WTC11 (cell line): ENCODE measurements at regions of chr11 and their contacts with region 1.

Region 1: GRCh38 chr11:57456960-57457642 is 3.2 kb upstream of the RTN4RL2 start:
- DNase-seq: peak; percentile 94
- ATAC-seq: peak; percentile 38
- H3K4me3 Mint-ChIP-seq: peak overlapping the region; percentile 80
- H3K27ac Mint-ChIP-seq: no peak overlapping the region
- H3K4me1 Mint-ChIP-seq: peaks cover 26% of the 10 kb centered on the region
- H3K27me3 Mint-ChIP-seq: peaks cover 62% of the 10 kb centered on the region
- CTCF ChIP-seq: peak; percentile 100

Region 2: DNA sequence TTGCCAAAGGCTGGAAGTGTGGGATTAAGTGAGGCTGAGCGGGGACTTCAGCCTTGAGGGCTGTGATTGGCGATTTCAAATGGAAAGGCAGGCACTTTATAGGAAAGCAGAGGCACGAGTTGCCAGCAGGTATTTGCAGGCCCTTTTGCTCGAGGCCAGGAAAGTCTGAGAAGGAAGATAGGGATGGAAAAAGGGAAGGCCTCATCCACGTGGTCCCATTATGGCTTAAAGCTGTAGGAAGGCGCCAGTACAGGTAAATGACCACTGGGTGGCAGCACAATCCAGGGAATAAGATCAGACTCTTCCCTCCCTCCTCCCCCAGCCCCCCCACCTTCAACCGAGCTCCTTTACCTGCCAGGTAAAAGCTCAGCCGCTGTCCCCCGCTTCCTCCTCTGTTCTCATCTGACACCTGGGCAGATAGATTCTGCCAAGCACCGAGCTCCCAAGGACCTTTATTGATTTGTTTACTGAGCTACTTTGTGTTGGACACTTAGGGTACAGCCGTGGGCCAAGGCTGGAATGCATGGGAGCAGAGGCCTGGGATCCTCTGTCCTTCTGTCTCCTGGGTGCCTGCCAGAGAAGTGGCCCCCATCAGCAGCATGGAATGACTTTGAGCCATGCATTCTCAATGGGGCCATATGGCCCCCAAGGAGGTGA is 111.4 kb before region 1 on chr11:
- CTCF ChIA-PET with region 1: interaction called, 59 read pairs
- POLR2A ChIA-PET with region 1: interaction called, 6 read pairs
- DNase-seq: peak; percentile 89
- ATAC-seq: peak; percentile 70
- H3K4me3 Mint-ChIP-seq: peak overlapping the region; percentile 24; the same call in 1 of the 2 replicates
- H3K27ac Mint-ChIP-seq: no peak overlapping the region
- H3K4me1 Mint-ChIP-seq: peaks cover 29% of the 10 kb centered on the region
- H3K27me3 Mint-ChIP-seq: peaks cover 16% of the 10 kb centered on the region
- CTCF ChIP-seq: peak; percentile 89

Region 3: DNA sequence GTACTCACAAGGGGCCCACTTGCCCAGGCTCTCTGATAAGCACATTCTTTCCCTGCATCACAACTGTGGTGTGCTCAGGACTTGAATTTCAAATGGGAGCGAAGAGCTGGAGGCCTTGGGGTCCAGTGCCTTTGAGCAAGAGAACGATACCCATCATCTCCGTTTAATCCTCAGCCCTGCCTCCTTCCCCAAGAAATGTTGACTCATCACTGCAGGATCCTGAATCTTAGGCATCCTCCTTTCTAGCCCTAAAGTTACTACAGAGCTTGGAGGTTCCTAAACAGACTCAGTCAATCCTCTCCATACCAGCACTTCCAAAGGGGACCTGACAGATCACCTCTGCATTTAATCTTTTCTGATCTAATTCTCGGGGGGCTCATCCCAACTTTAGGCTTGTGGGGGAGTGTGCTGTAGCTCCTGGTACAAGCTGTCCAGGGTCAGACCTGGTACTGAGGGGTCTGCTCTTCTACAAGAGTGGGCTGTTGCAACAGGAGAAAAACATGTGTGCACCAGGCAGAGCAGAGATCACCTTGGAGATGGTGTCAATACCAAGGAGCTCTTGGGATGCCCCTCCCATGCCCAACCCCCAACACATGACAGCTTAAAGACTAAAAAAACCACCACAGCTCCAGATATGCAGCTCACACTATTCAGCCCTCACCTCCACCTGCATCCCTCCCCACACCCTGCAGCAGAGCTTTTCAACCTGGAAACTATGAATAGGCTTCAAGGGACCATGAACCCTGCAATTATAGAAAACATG is 62.7 kb before region 1 on chr11:
- CTCF ChIA-PET with region 1: interaction called, 10 read pairs
- POLR2A ChIA-PET with region 1: no interaction called
- DNase-seq: no peak
- ATAC-seq: no peak
- H3K4me3 Mint-ChIP-seq: no peak overlapping the region
- H3K27ac Mint-ChIP-seq: no peak overlapping the region
- H3K4me1 Mint-ChIP-seq: no peaks in the 10 kb centered on the region
- H3K27me3 Mint-ChIP-seq: peaks cover 19% of the 10 kb centered on the region
- CTCF ChIP-seq: no peak

Region 4: GRCh38 chr11:57474017-57474802 is 17.1 kb after region 1 on chr11:
- CTCF ChIA-PET with region 1: interaction called, 260 read pairs
- POLR2A ChIA-PET with region 1: interaction called, 12 read pairs
- DNase-seq: no peak
- ATAC-seq: peak; percentile 29
- H3K4me3 Mint-ChIP-seq: no peak overlapping the region
- H3K27ac Mint-ChIP-seq: no peak overlapping the region
- H3K4me1 Mint-ChIP-seq: peaks cover 45% of the 10 kb centered on the region
- H3K27me3 Mint-ChIP-seq: peaks cover 46% of the 10 kb centered on the region
- CTCF ChIP-seq: no peak

Region 5: DNA sequence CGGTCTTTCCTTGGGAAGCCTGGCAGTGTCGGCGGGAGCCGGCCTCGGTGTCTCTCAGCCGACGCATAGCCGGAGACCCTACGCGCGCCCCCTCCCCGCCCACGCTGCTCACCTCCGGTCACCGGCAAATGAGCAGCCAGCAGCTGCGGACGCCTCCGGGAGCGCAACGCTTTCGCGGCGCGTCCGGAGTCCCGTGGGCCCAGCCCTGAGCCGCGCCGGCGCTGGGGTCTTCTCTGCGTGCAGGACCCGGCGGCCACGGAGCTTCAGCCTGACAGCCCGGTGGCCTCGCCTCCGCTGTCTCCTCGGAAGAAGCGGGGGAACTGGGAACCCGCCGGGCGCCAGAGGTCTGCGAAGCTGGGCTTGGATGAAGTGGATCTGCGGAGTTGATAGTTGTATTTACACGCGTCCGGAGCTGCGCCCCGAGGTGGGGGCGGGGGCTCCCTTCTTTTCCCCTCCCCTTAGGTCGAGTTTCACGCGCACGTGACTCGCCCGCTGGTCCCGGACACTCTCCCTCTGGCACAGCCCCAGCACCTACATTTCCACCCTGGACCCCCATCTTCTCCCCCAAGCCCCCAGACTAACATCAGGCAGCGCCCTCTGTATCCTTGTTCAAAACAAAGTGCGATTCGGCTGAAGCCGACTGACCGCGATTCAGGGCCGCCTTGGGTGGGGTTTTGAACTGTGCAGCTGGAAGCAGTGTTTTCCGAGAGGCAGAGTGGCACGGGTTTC is 58.4 kb after region 1 on chr11 and contains the start of gene SLC43A1:
- CTCF ChIA-PET with region 1: interaction called, 51 read pairs
- POLR2A ChIA-PET with region 1: interaction called, 5 read pairs
- DNase-seq: peak; percentile 54
- ATAC-seq: peak; percentile 29
- H3K4me3 Mint-ChIP-seq: peak within 1 kb of the TSS; percentile 93
- H3K27ac Mint-ChIP-seq: no peak within 1 kb of the TSS
- H3K4me1 Mint-ChIP-seq: peaks cover 20% of the 10 kb centered on the region
- H3K27me3 Mint-ChIP-seq: peaks cover 22% of the 10 kb centered on the region
- CTCF ChIP-seq: no peak
- total RNA-seq, gene SLC43A1: 20.5 to 27.1 TPM (median 21.5 TPM) in 3 replicates

Region 6: DNA sequence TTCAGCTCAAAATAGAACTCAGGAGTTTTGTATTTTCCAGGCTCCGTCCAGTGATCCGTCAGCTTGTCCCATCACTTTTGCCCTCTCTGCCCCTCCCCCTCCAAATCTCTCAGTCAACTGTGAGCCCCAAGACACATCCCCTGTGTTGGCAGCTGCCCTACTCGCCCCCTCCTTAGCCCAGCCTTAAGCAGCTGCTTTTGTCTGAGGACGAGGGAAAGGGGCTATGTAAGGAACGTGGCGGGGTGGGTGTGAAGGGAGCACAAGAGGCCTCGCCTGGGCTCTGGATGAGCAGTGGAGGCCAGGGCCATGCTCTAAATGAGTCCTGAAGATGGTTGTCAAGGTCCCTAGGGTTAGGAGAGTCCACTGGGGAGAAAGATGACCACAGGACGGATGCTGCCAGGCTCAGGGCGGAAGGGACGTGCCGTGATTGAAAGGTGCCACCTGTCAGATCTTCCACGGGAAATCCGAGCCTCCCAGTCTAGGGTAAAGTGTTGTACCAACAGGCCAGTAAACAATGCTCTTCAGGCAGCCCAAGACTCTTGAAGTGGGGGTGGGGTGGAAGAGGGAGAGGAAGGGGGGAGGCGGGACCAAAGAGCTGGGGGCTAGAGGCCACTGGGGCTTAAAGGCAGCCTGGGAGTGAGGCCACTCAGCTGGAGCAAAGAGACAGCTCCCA is 80.0 kb after region 1 on chr11 and contains the start of gene SMTNL1:
- CTCF ChIA-PET with region 1: interaction called, 11 read pairs
- POLR2A ChIA-PET with region 1: no interaction called
- DNase-seq: no peak
- ATAC-seq: peak; percentile 68
- H3K4me3 Mint-ChIP-seq: no peak within 1 kb of the TSS
- H3K27ac Mint-ChIP-seq: peak within 1 kb of the TSS; percentile 60
- H3K4me1 Mint-ChIP-seq: peaks cover 15% of the 10 kb centered on the region
- H3K27me3 Mint-ChIP-seq: peaks cover 12% of the 10 kb centered on the region
- CTCF ChIP-seq: no peak
- total RNA-seq, gene SMTNL1: 0.26 to 0.39 TPM (median 0.34 TPM) in 3 replicates

Region 7: DNA sequence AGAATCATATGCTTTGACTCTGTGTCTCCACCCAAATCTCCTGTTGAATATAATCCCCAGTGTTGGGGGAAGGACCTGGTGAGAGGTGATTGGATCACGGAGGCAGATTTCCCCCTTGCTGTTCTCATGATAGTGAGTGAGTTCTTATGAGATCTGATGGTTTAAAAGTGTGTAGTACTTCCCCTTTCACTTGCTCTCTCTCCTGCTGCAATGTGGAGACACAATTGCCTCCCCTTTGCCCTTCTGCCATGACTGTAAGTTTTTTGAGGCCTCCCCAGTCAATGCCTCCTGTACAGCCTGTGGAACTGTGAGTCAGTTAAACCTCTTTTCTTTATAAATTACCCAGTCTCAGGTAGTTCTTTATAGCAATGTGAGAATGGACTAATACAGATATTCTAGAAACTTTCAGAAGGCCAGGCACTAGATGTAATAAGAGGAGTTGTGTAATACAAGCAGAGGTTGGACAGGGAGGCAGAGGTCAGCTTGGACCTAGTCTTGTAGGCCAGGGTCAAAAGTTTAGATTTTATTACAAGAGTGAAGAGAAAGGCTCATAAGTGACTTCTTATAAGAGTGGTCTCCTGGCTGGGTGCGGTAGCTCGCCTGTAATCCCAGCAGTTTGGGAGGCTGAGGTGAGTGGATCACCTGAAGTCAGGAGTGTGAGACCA is 131.1 kb after region 1 on chr11:
- CTCF ChIA-PET with region 1: no interaction called
- POLR2A ChIA-PET with region 1: no interaction called
- DNase-seq: no peak
- ATAC-seq: no peak
- H3K4me3 Mint-ChIP-seq: no peak overlapping the region
- H3K27ac Mint-ChIP-seq: no peak overlapping the region
- H3K4me1 Mint-ChIP-seq: peaks cover 9% of the 10 kb centered on the region
- H3K27me3 Mint-ChIP-seq: peaks cover 4% of the 10 kb centered on the region
- CTCF ChIP-seq: no peak